GM18951 (cell line): ENCODE measurements at regions of chr6 and their contacts with region 1.

Region 1: DNA sequence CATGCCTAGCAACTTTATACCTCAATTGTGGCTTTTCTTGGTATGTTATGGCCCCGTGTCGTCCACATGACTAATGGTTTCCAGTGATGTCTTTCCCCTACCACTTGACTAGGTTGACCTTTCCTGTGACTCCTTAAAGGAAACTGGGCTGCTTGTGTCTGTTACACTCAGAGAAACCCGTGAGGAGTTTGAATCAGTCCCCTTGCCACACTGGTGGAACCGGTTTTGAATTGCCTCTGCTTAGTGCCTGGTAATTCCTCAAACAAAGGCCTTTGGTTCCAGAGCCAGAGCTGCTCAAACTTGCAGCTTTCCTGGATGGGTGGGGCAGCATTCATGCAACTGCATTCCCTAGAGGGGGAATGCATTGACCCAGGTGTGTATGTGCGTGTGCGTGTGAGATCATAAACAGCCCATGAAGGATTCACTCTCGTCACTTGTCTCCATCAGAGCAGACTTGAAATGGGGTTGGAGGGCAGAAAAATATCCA is 22.0 kb downstream of the ECT2L start:
- POLR2A ChIP-seq: no peak

Region 2: DNA sequence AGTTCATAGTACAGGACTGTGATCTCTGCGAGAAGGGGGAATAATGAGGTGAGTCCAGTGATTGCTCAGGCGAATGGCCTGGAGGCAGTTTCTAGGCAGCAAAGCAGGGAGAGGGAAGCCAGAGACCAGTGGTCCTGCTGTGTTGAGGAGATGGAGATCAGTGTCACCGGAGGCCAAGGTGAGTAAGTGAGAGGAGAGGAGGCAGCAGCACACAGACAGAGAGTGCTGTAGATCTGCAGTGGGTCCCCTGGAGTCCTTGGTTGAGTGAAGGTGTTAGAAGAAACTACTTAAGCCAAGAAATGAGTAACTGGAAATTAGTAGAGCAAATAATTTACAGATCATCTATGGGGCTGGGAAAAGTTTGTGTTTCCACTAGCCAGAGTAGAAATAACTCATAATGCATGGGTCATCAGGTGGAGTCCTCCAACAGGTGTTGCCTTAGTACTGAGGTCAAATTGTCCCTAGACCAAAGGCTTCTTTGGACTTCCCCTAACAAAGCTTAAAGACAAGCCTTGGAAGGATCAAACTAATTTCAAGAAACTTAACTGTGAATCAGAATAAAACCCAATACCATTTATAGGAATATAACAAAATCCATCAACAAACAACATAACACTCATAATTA is 400.3 kb before region 1 on chr6:
- in situ Hi-C with region 1: no loop called
- POLR2A ChIP-seq: no peak

Region 3: DNA sequence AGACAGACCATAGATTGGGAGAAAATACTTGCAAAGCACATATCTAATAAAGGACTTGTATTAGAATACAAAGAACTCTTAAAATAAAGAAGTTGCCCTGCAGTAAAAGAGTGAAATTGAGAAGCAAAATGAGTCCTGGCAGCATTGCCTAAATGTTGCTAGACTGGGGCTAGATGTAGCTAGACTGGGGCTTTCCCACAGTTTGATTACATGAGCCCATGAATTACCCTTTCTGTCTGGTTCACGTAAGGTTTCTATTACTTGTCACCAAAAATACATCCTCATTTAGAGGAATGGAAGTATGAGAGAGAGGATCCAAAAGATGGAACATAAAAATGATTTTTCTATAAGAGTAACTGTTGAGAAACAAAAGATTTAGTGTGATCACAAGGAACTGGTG is 101.9 kb before region 1 on chr6:
- in situ Hi-C with region 1: no loop called
- POLR2A ChIP-seq: no peak

Region 4: GRCh38 chr6:138987640-138988468 is 170.0 kb after region 1 on chr6 and contains the start of gene REPS1:
- in situ Hi-C with region 1: loop called (anchors 5 kb)
- POLR2A ChIP-seq: peak; percentile 89

Region 5: GRCh38 chr6:139124887-139125672 is 307.2 kb after region 1 on chr6:
- in situ Hi-C with region 1: loop called (anchors 25 kb)
- POLR2A ChIP-seq: no peak

Region 6: GRCh38 chr6:139219271-139219729 is 401.4 kb after region 1 on chr6:
- in situ Hi-C with region 1: loop called (anchors 25 kb)
- POLR2A ChIP-seq: peak; percentile 19